WTC11 (cell line): ENCODE measurements at regions of chr16 and their contacts with region 1.

Region 1: DNA sequence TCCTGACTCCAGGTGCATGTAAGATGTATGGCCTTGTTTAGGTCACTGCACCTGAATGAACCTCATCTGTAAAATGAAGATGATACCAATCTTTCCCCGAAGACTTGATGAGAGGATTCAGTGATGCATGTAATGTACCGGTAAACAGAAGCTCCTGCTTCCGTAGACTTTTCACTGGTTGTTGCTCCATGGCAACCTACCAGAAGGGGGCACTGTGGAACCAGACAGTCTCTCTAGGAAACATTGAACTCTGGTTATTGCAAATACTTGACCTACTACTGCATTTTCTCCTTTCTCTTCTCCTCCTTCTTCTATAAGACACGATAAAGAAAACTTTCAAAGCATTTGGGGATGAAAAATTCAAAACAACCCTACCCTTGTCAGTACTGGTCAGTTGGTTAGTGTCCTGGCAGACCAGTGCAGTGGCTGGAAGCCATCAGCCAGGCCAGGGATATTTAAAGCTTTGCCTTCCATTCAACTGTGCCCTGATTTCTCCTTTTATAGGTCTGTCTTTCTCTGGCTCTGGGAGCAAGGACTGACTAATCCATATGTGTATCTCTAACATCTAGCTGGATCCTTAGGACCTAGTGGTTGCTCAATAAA is 667.4 kb upstream of the SALL1 start:
- DNase-seq: peak; percentile 80
- ATAC-seq: peak; percentile 76
- H3K4me3 Mint-ChIP-seq: no peak overlapping the region
- H3K27ac Mint-ChIP-seq: no peak overlapping the region
- H3K4me1 Mint-ChIP-seq: no peaks in the 10 kb centered on the region
- H3K27me3 Mint-ChIP-seq: no peaks in the 10 kb centered on the region; the same call in 1 of the 2 replicates
- CTCF ChIP-seq: peak; percentile 80

Region 2: GRCh38 chr16:51834133-51834532 is 15.7 kb after region 1 on chr16:
- CTCF ChIA-PET with region 1: interaction called, 17 read pairs
- POLR2A ChIA-PET with region 1: no interaction called
- DNase-seq: no peak
- ATAC-seq: no peak
- H3K4me3 Mint-ChIP-seq: no peak overlapping the region
- H3K27ac Mint-ChIP-seq: no peak overlapping the region
- H3K4me1 Mint-ChIP-seq: peaks cover 13% of the 10 kb centered on the region
- H3K27me3 Mint-ChIP-seq: no peaks in the 10 kb centered on the region
- CTCF ChIP-seq: no peak

Region 3: GRCh38 chr16:51939378-51939871 is 121.0 kb after region 1 on chr16:
- CTCF ChIA-PET with region 1: interaction called, 12 read pairs
- POLR2A ChIA-PET with region 1: no interaction called
- DNase-seq: no peak
- ATAC-seq: peak; percentile 56
- H3K4me3 Mint-ChIP-seq: no peak overlapping the region
- H3K27ac Mint-ChIP-seq: no peak overlapping the region
- H3K4me1 Mint-ChIP-seq: peaks cover 31% of the 10 kb centered on the region
- H3K27me3 Mint-ChIP-seq: no peaks in the 10 kb centered on the region
- CTCF ChIP-seq: no peak

Region 4: GRCh38 chr16:51951668-51952298 is 133.3 kb after region 1 on chr16:
- CTCF ChIA-PET with region 1: interaction called, 13 read pairs
- POLR2A ChIA-PET with region 1: no interaction called
- DNase-seq: peak; percentile 46
- ATAC-seq: peak; percentile 90
- H3K4me3 Mint-ChIP-seq: no peak overlapping the region
- H3K27ac Mint-ChIP-seq: peak overlapping the region; percentile 93
- H3K4me1 Mint-ChIP-seq: peaks cover 67% of the 10 kb centered on the region
- H3K27me3 Mint-ChIP-seq: no peaks in the 10 kb centered on the region
- CTCF ChIP-seq: no peak

Region 5: GRCh38 chr16:51971184-51971583 is 152.7 kb after region 1 on chr16:
- CTCF ChIA-PET with region 1: interaction called, 149 read pairs
- POLR2A ChIA-PET with region 1: interaction called, 3 read pairs
- DNase-seq: peak; percentile 46
- ATAC-seq: peak; percentile 85
- H3K4me3 Mint-ChIP-seq: no peak overlapping the region
- H3K27ac Mint-ChIP-seq: no peak overlapping the region
- H3K4me1 Mint-ChIP-seq: peaks cover 31% of the 10 kb centered on the region
- H3K27me3 Mint-ChIP-seq: no peaks in the 10 kb centered on the region
- CTCF ChIP-seq: peak; percentile 48; the same call in 1 of the 2 replicates

Region 6: GRCh38 chr16:51982715-51983680 is 164.6 kb after region 1 on chr16:
- CTCF ChIA-PET with region 1: interaction called, 59 read pairs
- POLR2A ChIA-PET with region 1: no interaction called
- DNase-seq: peak; percentile 22
- ATAC-seq: no peak; the same call in 1 of the 2 replicates
- H3K4me3 Mint-ChIP-seq: no peak overlapping the region
- H3K27ac Mint-ChIP-seq: no peak overlapping the region
- H3K4me1 Mint-ChIP-seq: peaks cover 2% of the 10 kb centered on the region; the same call in 1 of the 2 replicates
- H3K27me3 Mint-ChIP-seq: 0 out of 2 replicates have a peak, but pooled peaks cover 2% of the 10 kb centered on the region
- CTCF ChIP-seq: peak; percentile 69